Activated T-helper 2 cell treated with anti-CD3 and anti-CD28 coated beads, Interferon-gamma antibody, Interleukin-2, Interleukin-4, amounts not matched to agents 10 μg/mL and 5 μg/mL and 100 μg/mL, durations not matched to agents 14 hours and 24 hours and 36 hours (primary cell): ENCODE measurements at regions of chr15 and their contacts with region 1.

Region 1: GRCh38 chr15:35206060-35206675 is 121.1 kb upstream of the NANOGP8 start:
- DNase-seq: no peak
- H3K4me3 Mint-ChIP-seq: no peak overlapping the region
- H3K27ac Mint-ChIP-seq: no peak overlapping the region
- H3K4me1 Mint-ChIP-seq: no peaks in the 10 kb centered on the region
- H3K27me3 Mint-ChIP-seq: no peaks in the 10 kb centered on the region

Region 2: GRCh38 chr15:35078221-35078915 is 127.8 kb before region 1 on chr15:
- intact Hi-C with region 1: loop called (anchors 10 kb)
- DNase-seq: peak; percentile 12
- H3K4me3 Mint-ChIP-seq: no peak overlapping the region
- H3K27ac Mint-ChIP-seq: no peak overlapping the region
- H3K4me1 Mint-ChIP-seq: no peaks in the 10 kb centered on the region
- H3K27me3 Mint-ChIP-seq: no peaks in the 10 kb centered on the region